ENCODE measurements at regions of chr1 and their contacts with region 1.

Region 1: DNA sequence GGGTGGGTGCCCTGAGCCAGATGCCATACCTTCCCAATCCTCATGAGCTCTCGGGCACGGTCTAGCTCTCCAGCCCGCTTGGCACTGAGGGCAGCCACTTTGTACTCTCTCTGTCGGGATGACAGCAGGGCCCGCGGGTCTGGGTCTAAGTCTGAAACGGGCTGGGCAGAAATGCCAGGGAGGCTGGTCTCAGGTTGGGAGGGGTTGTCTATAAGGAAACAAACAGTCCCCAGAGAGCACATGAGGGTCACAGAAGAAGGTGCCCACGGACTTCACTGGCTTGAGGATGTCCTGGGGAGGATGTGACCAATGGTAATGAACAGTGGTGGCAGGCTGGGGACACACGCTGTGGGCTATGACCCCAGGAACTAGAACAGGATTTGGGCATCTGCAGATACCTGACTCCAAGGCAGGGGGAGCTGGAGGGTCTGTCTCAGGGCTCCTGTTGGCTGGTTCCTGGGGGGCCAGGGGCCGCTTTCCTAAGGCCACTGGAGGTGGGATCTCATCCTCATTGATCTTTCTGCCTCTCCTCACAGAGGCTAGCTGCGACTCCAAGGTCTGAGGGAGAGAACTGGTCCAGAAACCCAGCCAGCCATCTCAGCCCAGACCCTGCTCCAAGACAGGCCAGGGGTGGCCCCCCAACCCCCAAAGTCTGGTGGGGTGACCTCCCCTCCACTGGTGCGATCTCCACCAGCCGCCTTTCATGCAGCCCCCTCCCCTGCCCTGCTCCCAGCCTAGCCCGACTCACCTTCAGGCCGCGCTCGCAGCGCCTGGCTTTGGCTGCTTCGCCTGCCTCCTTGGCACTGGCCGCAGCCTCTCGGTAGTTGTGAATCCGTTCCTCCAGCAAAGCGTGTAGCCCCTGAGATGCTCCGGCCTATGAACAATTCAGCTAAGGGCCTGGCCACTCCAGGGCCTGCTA is 6.1 kb downstream of the CC2D1B start:
- DNase-seq: no peak
- H3K4me3 ChIP-seq: no peak overlapping the region
- H3K27ac ChIP-seq: no peak overlapping the region
- H3K4me1 ChIP-seq: peaks cover 7 to 21% (median 12%) of the 10 kb centered on the region in 4 donors
- H3K27me3 ChIP-seq: no peaks in the 10 kb centered on the region
- CTCF ChIP-seq: no peak
- EP300 ChIP-seq: no peak
- POLR2A ChIP-seq: no peak

Region 2: DNA sequence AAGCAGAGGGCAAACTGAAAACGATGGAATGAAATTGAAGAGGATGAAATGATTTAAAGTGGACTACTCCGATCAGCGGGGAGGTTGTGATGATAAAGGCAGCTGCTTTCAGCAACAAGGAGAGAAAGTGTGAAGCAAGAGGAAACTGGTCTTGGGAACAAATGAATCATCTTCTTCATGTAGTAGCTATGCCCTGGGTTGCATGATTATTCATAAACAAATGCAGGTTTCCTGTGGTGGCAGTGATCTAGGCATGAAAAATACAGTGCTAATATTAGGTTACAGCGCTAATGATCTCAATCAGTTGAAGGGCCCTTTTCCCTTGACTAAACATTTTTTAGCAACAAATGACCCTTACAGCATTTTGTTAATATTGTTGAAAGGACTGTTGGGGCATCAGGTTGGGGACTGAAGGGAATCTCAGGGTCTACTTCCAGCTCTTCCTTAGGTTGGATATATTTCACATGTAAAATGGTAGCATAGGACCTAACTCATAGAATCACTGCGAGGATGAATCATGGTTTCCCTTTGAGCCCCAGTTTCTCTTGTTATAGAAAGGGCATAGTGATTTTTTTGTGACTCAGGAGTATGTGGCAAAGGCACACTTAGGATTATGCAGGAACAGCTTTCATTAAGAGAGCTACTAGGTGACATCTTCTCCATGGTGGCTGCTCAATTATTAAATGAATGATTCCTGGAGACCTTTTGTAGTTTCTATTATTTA is 220.0 kb before region 1 on chr1:
- intact Hi-C with region 1: loop called (anchors 10 kb)
- DNase-seq: no peak
- H3K4me3 ChIP-seq: no peak overlapping the region
- H3K27ac ChIP-seq: peak overlapping the region in 3 of 5 donors; percentile 15 to 97 (median 35)
- H3K4me1 ChIP-seq: peaks cover 6 to 40% (median 21%) of the 10 kb centered on the region in 4 donors
- H3K27me3 ChIP-seq: no peaks in the 10 kb centered on the region
- CTCF ChIP-seq: no peak
- EP300 ChIP-seq: no peak
- POLR2A ChIP-seq: no peak

Region 3: DNA sequence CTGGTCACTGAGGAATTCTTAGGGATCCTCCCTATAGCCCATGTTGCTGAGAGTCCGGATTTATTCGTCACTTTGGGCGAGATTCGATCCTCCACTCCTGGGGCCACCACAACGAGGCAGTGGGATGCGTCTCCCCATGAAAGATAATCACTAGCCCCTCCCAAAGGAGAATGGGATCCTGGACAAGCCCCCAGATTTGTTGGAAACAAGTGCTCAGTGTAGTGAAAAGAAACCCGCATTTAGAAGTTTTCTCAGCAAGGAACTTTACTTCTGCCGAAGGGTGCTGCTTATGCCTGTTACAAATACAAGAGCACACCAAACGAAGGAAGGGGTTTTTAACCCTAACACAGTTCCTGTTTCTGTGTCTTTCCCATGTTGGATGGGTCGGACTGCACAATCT is 134.8 kb before region 1 on chr1:
- intact Hi-C with region 1: no loop called
- DNase-seq: no peak
- H3K4me3 ChIP-seq: no peak overlapping the region
- H3K27ac ChIP-seq: no peak overlapping the region
- H3K4me1 ChIP-seq: no peaks in the 10 kb centered on the region
- H3K27me3 ChIP-seq: no peaks in the 10 kb centered on the region
- CTCF ChIP-seq: no peak
- EP300 ChIP-seq: no peak
- POLR2A ChIP-seq: no peak

Region 4: DNA sequence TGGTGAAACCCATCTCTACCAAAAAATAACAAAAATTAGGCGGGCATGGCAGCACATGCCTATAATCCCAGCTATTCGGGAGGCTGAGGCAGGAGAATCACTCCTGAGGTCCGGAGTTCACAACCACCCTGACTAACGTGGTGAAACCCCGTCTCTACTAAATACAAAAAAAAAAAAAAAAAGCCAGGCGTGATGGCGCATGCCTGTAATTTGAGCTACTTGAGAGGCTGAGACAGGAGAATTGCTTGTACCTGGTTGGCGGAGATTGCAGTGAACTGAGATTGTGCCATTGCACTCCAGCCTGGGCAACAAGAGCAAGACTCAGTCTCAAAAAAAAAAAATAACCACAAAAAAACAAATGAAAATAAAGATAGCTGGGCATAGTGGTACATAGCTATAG is 36.2 kb before region 1 on chr1:
- intact Hi-C with region 1: no loop called
- DNase-seq: no peak
- H3K4me3 ChIP-seq: no peak overlapping the region
- H3K27ac ChIP-seq: no peak overlapping the region
- H3K4me1 ChIP-seq: no peaks in the 10 kb centered on the region
- H3K27me3 ChIP-seq: no peaks in the 10 kb centered on the region
- CTCF ChIP-seq: no peak
- EP300 ChIP-seq: no peak
- POLR2A ChIP-seq: no peak

Measured in stomach (tissue), 19 donors.